ENCODE measurements at regions of chr7 and their contacts with region 1.

Region 1: DNA sequence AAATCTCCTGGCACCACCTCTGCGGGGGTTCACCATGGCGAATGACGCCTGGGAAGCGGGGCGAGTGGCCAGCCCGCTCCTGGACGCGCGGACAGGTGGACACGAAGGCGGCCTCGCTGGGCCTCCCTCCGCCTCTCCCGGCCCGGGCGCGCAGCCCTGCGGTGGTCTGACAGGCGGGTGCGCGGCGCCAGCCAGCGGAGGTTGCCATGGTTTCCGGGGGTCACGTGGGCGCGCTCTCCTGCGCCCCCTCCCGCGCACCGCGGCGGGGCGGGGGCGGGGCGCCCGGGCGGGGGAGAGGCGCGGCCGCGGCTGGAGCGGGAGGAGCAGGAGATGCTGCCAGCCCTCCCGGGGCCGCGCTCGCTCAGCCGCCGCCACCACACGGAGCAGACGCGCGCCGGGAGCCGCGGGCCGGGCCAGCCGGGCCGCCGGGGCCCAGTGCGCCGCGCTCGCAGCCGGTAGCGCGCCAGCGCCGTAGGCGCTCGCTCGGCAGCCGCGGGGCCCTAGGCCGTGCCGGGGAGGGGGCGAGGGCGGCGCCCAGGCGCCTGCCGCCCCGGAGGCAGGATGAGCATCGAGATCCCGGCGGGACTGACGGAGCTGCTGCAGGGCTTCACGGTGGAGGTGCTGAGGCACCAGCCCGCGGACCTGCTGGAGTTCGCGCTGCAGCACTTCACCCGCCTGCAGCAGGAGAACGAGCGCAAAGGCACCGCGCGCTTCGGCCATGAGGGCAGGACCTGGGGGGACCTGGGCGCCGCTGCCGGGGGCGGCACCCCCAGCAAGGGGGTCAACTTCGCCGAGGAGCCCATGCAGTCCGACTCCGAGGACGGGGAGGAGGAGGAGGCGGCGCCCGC is at the start of gene PRKAR2B:
- DNase-seq: peak; percentile 83
- H3K4me3 ChIP-seq: peak within 1 kb of the TSS; percentile 95 to 97 (median 95)
- H3K27ac ChIP-seq: peak within 1 kb of the TSS; percentile 22
- H3K4me1 ChIP-seq: peaks cover 44% of the 10 kb centered on the region
- H3K27me3 ChIP-seq: no peaks in the 10 kb centered on the region
- CTCF ChIP-seq: peak in 1 of 2 donors; percentile 18
- POLR2A ChIP-seq: peak; percentile 58
- total RNA-seq, gene PRKAR2B: 37.6 and 39.8 TPM in 2 replicates

Region 2: GRCh38 chr7:106598663-106599342 is 445.8 kb before region 1 on chr7:
- CTCF ChIA-PET with region 1: no interaction called
- POLR2A ChIA-PET with region 1: no interaction called
- dilution Hi-C with region 1: no loop called
- intact Hi-C with region 1: loop called (anchors 10 kb)
- DNase-seq: peak; percentile 87
- H3K4me3 ChIP-seq: peak overlapping the region in 2 of 3 experiments; percentile 29 to 43
- H3K27ac ChIP-seq: peak overlapping the region; percentile 41
- H3K4me1 ChIP-seq: peaks cover 3% of the 10 kb centered on the region
- H3K27me3 ChIP-seq: no peaks in the 10 kb centered on the region
- CTCF ChIP-seq: no peak
- POLR2A ChIP-seq: peak; percentile 32

Measured in endothelial cell of umbilical vein (primary cell).